H1 (cell line): ENCODE measurements at regions of chr22 and their contacts with region 1.

Region 1: GRCh38 chr22:21982338-21982965 is at the start of gene TOP3B:
- DNase-seq: peak in 1 of 2 experiments; percentile 88
- H3K4me3 ChIP-seq: peak within 1 kb of the TSS; percentile 83 to 98 (median 94)
- H3K27ac ChIP-seq: peak within 1 kb of the TSS; percentile 57; the same call in 1 of the 2 replicates
- H3K4me1 ChIP-seq: peaks cover 0 to 2% (median 0%) of the 10 kb centered on the region in 4 experiments; a peak in 2 of 7 replicates
- H3K27me3 ChIP-seq: peaks cover 3 to 17% (median 15%) of the 10 kb centered on the region in 4 experiments; a peak in 5 of 7 replicates
- CTCF ChIP-seq: no peak
- EP300 ChIP-seq: peak; percentile 18 to 69; a peak in 2 of 3 replicates
- POLR2A ChIP-seq: peak in 1 of 2 experiments; percentile 93; a peak in 2 of 3 replicates
- RAD21 ChIP-seq: no peak
- total RNA-seq, gene TOP3B: 49.3 and 52.8 TPM in 2 replicates

Region 2: DNA sequence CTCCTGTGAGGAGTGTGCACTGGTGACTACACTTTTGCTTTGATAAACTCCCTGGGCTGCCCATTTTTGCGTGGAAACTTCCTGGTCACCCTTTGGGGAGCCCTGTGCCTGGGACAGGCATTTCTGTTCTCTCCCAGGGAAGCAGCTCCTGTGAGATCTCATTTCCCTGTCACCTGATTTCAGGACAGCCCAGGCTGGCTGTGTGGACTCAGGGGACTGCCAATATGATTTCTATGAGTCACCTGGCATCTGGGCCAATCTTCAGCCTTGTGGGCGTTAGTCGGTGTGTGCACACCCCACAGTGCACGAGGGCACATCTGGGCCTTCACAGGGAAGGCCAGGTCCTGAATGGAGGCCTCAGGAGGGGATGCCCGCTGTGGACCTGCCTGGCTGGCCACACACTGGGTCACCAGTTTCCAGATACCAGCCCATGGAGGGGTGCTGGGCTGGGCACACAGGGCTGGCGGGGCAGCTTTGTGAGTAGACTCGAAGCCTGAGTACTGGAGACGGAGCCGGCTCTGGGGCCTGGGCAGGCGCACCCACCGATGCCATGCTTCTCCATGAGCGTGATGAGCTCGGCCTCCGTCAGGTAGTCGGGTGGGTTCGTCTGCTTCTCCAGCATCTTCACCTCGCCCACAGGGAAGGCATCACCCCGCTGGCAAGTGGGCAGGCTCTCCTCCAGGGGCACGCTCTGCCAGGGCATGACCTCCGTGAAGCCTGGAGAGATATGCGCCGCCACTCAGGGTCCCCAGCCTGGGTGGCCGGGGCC is 20.4 kb before region 1 on chr22:
- CTCF ChIA-PET with region 1: interaction called, 3 read pairs
- POLR2A ChIA-PET with region 1: interaction called, 19 read pairs
- DNase-seq: no peak
- H3K4me3 ChIP-seq: no peak overlapping the region
- H3K27ac ChIP-seq: no peak overlapping the region
- H3K4me1 ChIP-seq: no peaks in the 10 kb centered on the region
- H3K27me3 ChIP-seq: no peaks in the 10 kb centered on the region; a peak in 1 of 7 replicates
- CTCF ChIP-seq: no peak
- EP300 ChIP-seq: no peak
- POLR2A ChIP-seq: no peak
- RAD21 ChIP-seq: no peak

Region 3: GRCh38 chr22:21996175-21996720 is 13.8 kb after region 1 on chr22:
- CTCF ChIA-PET with region 1: interaction called, 12 read pairs
- POLR2A ChIA-PET with region 1: interaction called, 8 read pairs
- DNase-seq: no peak
- H3K4me3 ChIP-seq: no peak overlapping the region
- H3K27ac ChIP-seq: no peak overlapping the region
- H3K4me1 ChIP-seq: no peaks in the 10 kb centered on the region
- H3K27me3 ChIP-seq: peaks cover 47 to 98% (median 93%) of the 10 kb centered on the region in 4 experiments
- CTCF ChIP-seq: no peak
- EP300 ChIP-seq: no peak
- POLR2A ChIP-seq: no peak
- RAD21 ChIP-seq: no peak